PC-3 (cell line): ENCODE measurements at regions of chr12 and their contacts with region 1.

Region 1: GRCh38 chr12:106919910-106920544 is 35.7 kb upstream of the TMEM263 start:
- DNase-seq: peak; percentile 78
- ATAC-seq: peak; percentile 53
- H3K4me3 ChIP-seq: no peak overlapping the region
- H3K27ac ChIP-seq: no peak overlapping the region
- H3K4me1 ChIP-seq: no peaks in the 10 kb centered on the region
- H3K27me3 ChIP-seq: no peaks in the 10 kb centered on the region
- CTCF ChIP-seq: peak; percentile 91

Region 2: GRCh38 chr12:106223485-106224354 is 696.3 kb before region 1 on chr12:
- CTCF ChIA-PET with region 1: interaction called, 5 read pairs
- POLR2A ChIA-PET with region 1: interaction called, 5 read pairs
- intact Hi-C with region 1: loop called (anchors 5 kb)
- DNase-seq: peak; percentile 89
- ATAC-seq: peak; percentile 80
- H3K4me3 ChIP-seq: no peak overlapping the region
- H3K27ac ChIP-seq: no peak overlapping the region
- H3K4me1 ChIP-seq: peaks cover 11% of the 10 kb centered on the region
- H3K27me3 ChIP-seq: no peaks in the 10 kb centered on the region
- CTCF ChIP-seq: peak; percentile 94

Region 3: GRCh38 chr12:106357549-106358395 is 562.3 kb before region 1 on chr12 and contains the start of gene POLR3B:
- CTCF ChIA-PET with region 1: interaction called, 3 read pairs
- POLR2A ChIA-PET with region 1: interaction called, 4 read pairs
- intact Hi-C with region 1: loop called (anchors 1 kb)
- DNase-seq: peak; percentile 97
- ATAC-seq: peak; percentile 85
- H3K4me3 ChIP-seq: peak within 1 kb of the TSS; percentile 82
- H3K27ac ChIP-seq: peak within 1 kb of the TSS; percentile 70
- H3K4me1 ChIP-seq: peaks cover 18% of the 10 kb centered on the region
- H3K27me3 ChIP-seq: no peaks in the 10 kb centered on the region
- CTCF ChIP-seq: peak; percentile 93
- total RNA-seq, gene POLR3B: 23.4 and 24.3 TPM in 2 replicates

Region 4: GRCh38 chr12:106386813-106387535 is 533.1 kb before region 1 on chr12:
- CTCF ChIA-PET with region 1: interaction called, 5 read pairs
- POLR2A ChIA-PET with region 1: no interaction called
- intact Hi-C with region 1: loop called (anchors 1 kb)
- DNase-seq: no peak
- ATAC-seq: no peak
- H3K4me3 ChIP-seq: no peak overlapping the region
- H3K27ac ChIP-seq: no peak overlapping the region
- H3K4me1 ChIP-seq: no peaks in the 10 kb centered on the region
- H3K27me3 ChIP-seq: no peaks in the 10 kb centered on the region
- CTCF ChIP-seq: no peak

Region 5: GRCh38 chr12:106669216-106669615 is 250.8 kb before region 1 on chr12:
- CTCF ChIA-PET with region 1: no interaction called
- POLR2A ChIA-PET with region 1: no interaction called
- intact Hi-C with region 1: loop called (anchors 10 kb)
- DNase-seq: no peak
- ATAC-seq: no peak
- H3K4me3 ChIP-seq: no peak overlapping the region
- H3K27ac ChIP-seq: no peak overlapping the region
- H3K4me1 ChIP-seq: no peaks in the 10 kb centered on the region
- H3K27me3 ChIP-seq: peaks cover 78% of the 10 kb centered on the region
- CTCF ChIP-seq: no peak

Region 6: GRCh38 chr12:106682592-106683234 is 237.3 kb before region 1 on chr12:
- CTCF ChIA-PET with region 1: no interaction called
- POLR2A ChIA-PET with region 1: no interaction called
- intact Hi-C with region 1: loop called (anchors 5 kb)
- DNase-seq: peak; percentile 37
- ATAC-seq: peak; percentile 48
- H3K4me3 ChIP-seq: no peak overlapping the region
- H3K27ac ChIP-seq: no peak overlapping the region
- H3K4me1 ChIP-seq: no peaks in the 10 kb centered on the region
- H3K27me3 ChIP-seq: peaks cover 32% of the 10 kb centered on the region
- CTCF ChIP-seq: peak; percentile 54; the same call in 1 of the 2 replicates

Region 7: DNA sequence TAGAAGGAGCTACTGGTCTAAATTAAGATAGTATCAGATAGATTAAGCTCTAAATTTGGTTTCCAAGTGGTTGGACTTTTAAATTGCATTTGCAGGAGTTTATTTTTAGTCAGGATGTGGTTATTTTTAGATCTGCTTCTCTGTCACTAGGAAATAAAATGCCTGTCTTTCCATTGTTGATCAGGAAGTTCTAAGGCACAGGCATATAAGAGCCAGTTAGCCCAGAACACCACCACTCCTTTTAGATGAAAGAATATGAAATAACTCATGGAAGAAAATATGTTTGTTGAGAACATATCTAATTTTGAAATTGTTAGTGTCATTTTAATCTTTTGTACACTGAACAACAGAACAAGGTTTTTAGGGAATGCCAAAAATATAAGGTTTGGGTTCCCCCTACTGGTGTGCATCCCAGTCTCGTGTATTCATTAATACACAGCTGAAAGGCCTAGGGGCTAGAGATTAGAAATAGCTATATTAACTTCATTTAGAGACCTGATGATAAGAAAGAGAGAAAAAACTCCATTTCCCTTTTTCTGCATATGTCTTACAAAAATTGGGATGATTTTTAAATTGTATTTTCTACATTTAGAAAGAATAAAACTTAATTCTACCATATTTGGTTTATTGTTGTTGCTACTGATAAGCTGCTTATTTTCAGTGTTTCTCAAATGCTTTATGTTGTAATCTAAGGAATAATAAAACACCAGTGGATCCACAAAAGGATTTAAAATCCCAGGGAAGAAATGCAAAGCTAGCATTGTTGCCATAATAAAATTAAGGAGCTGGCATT is 78.3 kb before region 1 on chr12:
- CTCF ChIA-PET with region 1: interaction called, 3 read pairs
- POLR2A ChIA-PET with region 1: no interaction called
- intact Hi-C with region 1: loop called (anchors 2 kb)
- DNase-seq: peak; percentile 71
- ATAC-seq: peak; percentile 68
- H3K4me3 ChIP-seq: no peak overlapping the region
- H3K27ac ChIP-seq: no peak overlapping the region
- H3K4me1 ChIP-seq: peaks cover 25% of the 10 kb centered on the region
- H3K27me3 ChIP-seq: no peaks in the 10 kb centered on the region
- CTCF ChIP-seq: peak; percentile 91

Region 8: GRCh38 chr12:106941481-106942156 is 21.6 kb after region 1 on chr12:
- CTCF ChIA-PET with region 1: no interaction called
- POLR2A ChIA-PET with region 1: no interaction called
- intact Hi-C with region 1: no loop called
- DNase-seq: no peak
- ATAC-seq: no peak
- H3K4me3 ChIP-seq: no peak overlapping the region
- H3K27ac ChIP-seq: no peak overlapping the region
- H3K4me1 ChIP-seq: no peaks in the 10 kb centered on the region
- H3K27me3 ChIP-seq: no peaks in the 10 kb centered on the region
- CTCF ChIP-seq: no peak